OCI-LY7 (cell line): ENCODE measurements at regions of chr15 and their contacts with region 1.

Region 1: DNA sequence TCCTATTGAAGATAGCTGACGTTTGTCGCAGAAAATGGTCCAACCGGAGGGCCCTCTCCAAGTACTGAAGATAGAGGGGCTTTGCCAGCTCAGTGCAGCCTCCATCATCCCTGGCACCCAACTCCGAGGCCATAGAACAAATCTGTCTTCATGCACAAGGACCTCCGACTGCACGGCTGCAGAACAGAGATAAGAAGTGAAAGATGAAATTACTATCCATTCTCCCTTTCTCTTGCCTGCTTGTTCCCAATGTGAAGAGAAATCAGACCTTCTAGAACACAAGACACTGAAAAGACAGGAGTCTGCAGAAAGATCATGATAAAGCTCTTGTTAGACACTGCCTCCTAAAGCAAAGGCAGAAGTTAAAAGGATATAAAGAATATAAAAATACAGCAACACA is 19.9 kb downstream of the INO80 start:
- DNase-seq: no peak
- H3K4me3 ChIP-seq: no peak overlapping the region
- H3K27ac ChIP-seq: no peak overlapping the region
- H3K4me1 ChIP-seq: no peaks in the 10 kb centered on the region
- CTCF ChIP-seq: no peak

Region 2: DNA sequence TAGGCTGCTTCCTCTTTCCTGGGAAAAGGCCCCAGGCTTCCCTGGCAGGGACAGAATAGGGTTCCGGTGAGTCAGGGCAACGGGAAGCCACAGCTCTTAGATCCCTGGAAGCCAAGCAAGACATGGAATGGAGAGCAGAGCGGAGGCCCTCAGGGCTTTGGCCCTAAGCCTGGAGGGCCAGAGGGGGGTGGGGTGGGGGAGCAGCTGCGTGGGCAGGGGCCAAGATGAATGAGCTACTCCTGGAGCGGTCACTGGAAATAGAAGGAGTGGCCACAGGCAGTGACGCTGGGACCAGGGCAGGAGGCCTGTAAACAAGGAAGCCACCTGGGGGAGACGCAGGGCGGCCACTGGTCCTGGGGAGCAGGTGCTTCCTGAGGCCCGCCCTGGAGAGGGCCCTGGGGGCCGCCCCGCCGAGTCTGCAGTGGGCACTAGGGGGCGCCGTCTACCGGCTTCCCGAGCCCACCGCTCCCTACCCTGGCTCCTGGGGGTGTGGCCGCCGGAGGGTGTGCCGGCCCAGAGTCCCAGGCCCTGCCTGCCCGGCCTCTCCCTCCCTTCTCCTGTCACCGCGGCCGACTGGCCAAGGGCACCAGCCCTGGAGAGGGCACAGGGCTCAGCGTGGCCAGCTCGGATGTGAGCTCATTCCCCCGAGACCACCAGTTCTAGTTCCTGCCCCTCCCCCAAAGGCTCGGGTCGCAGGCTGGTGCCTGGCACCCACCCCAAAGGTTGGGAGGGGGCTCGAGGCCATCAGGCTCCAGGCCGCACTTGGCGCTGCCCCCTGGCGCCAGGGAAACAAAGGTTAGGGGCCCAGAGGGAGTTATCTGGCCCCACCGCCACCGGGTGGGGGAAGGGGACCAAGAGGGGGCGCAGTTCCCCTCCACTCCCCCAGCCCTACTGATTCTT is 189.8 kb before region 1 on chr15:
- CTCF ChIA-PET with region 1: no interaction called
- POLR2A ChIA-PET with region 1: no interaction called
- intact Hi-C with region 1: no loop called
- DNase-seq: peak; percentile 91
- H3K4me3 ChIP-seq: peak overlapping the region; percentile 66
- H3K27ac ChIP-seq: peak overlapping the region; percentile 72
- H3K4me1 ChIP-seq: peaks cover 69% of the 10 kb centered on the region
- CTCF ChIP-seq: peak; percentile 87

Region 3: DNA sequence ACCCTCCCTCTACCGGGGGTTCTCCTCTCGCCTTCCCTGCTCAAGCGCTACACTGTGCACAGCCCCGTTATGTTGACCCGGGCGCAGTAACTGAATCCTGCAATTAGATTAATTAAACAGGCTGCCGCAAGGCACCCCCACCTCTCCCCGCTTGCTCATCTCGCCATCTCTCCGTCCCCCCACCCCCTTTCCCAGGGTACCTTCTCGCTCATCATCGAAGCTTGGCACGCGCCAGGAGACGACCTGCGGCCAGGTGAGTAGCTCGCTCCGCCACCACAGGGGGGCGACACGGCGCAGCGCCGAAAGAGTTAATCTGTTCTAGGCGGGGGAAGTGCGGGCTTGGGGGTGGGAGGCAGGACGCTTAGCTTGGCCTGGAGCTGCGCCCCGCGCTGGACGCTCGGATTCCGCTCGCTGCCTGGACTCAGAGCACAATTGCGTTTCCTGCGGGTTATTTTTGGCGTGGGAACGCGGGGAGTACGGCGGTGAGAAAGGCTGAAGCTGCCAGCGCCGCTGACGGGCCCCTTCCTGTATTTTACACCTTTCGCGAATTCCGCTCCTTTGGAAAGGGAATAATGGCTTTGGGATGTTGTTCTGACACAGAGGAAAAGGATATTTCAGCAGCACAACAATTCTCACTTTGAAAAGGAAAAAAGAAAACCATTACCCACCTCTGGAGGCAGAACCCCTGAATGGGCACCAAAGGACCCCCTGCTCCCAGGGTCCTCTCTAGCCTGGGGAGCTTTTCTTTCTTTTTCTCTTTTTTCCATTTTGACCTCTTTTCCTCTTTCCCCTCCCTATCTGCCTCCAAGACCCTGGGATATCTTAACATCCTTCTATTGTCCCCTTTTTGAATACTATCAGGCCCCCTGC is 165.5 kb before region 1 on chr15:
- CTCF ChIA-PET with region 1: interaction called, 15 read pairs
- POLR2A ChIA-PET with region 1: no interaction called
- intact Hi-C with region 1: no loop called
- DNase-seq: peak; percentile 54
- H3K4me3 ChIP-seq: peak overlapping the region; percentile 35
- H3K27ac ChIP-seq: no peak overlapping the region
- H3K4me1 ChIP-seq: peaks cover 26% of the 10 kb centered on the region
- CTCF ChIP-seq: peak; percentile 87

Region 4: GRCh38 chr15:41350057-41350717 is 254.0 kb after region 1 on chr15:
- CTCF ChIA-PET with region 1: no interaction called
- POLR2A ChIA-PET with region 1: no interaction called
- intact Hi-C with region 1: loop called (anchors 10 kb)
- DNase-seq: no peak
- H3K4me3 ChIP-seq: no peak overlapping the region
- H3K27ac ChIP-seq: no peak overlapping the region
- H3K4me1 ChIP-seq: no peaks in the 10 kb centered on the region
- CTCF ChIP-seq: no peak